Activated T-helper 1 cell treated with anti-CD3 and anti-CD28 coated beads, Interleukin-12 subunit alpha, Interleukin-12 subunit beta, Interleukin-2, Interleukin-4 antibody, amounts not matched to agents 30 ng/mL and 10 ng/mL and 1 ng/mL, durations not matched to agents 14 hours and 24 hours and 36 hours (primary cell): ENCODE measurements at regions of chr10 and their contacts with region 1.

Region 1: GRCh38 chr10:23438550-23439441 is at the start of gene OTUD1:
- DNase-seq: peak; percentile 94
- H3K4me3 Mint-ChIP-seq: peak within 1 kb of the TSS; percentile 83
- H3K27ac Mint-ChIP-seq: peak within 1 kb of the TSS; percentile 84
- H3K4me1 Mint-ChIP-seq: peaks cover 47% of the 10 kb centered on the region
- H3K27me3 Mint-ChIP-seq: peaks cover 5% of the 10 kb centered on the region
- total RNA-seq, gene OTUD1: 19.1 and 20.3 TPM in 2 replicates

Region 2: GRCh38 chr10:23331567-23332290 is 107.1 kb before region 1 on chr10:
- intact Hi-C with region 1: loop called (anchors 2 kb)
- DNase-seq: no peak
- H3K4me3 Mint-ChIP-seq: no peak overlapping the region
- H3K27ac Mint-ChIP-seq: peak overlapping the region; percentile 1
- H3K4me1 Mint-ChIP-seq: peaks cover 20% of the 10 kb centered on the region
- H3K27me3 Mint-ChIP-seq: no peaks in the 10 kb centered on the region

Region 3: GRCh38 chr10:23391821-23392220 is 47.0 kb before region 1 on chr10:
- intact Hi-C with region 1: loop called (anchors 2 kb)
- DNase-seq: no peak
- H3K4me3 Mint-ChIP-seq: no peak overlapping the region
- H3K27ac Mint-ChIP-seq: peak overlapping the region; percentile 16
- H3K4me1 Mint-ChIP-seq: peaks cover 9% of the 10 kb centered on the region
- H3K27me3 Mint-ChIP-seq: no peaks in the 10 kb centered on the region

Region 4: DNA sequence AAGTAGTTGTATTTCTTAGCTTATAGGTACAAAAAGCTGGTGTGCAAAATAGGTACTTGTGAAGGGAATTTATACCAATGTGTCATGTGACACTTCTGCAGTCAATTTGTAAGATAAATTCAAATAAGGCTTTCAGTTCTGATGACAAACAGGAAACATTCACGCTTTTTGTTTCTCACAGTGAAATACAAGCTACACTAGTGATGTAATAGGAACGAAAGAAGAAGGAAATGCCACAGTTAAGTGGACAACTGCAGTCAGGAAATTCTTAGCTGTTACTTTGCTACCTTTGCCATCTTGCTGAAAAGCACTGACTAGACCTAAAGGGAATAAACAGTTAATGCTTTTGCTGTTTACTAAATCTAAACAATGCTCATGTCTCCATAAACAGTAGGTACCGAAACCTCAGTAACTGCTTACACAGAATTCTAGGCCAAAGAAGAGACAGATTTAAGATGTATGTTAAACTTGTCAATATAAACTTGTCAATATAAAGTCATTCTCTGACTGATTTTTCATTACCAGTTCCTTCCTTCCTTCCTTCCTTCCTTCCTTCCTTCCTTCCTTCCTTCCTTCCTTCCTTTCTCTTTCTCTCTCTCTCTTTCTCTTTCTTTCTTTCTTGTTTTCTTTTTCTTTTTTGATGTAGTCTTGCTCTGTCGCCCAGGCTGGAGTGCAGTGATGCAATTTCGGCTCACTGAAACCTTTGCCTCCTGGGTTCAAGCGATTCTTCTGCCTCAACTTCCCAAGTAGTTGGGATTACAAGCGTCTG is 10.2 kb after region 1 on chr10:
- intact Hi-C with region 1: loop called (anchors 1 kb)
- DNase-seq: no peak
- H3K4me3 Mint-ChIP-seq: peak overlapping the region; percentile 21
- H3K27ac Mint-ChIP-seq: peak overlapping the region; percentile 88
- H3K4me1 Mint-ChIP-seq: peaks cover 35% of the 10 kb centered on the region
- H3K27me3 Mint-ChIP-seq: no peaks in the 10 kb centered on the region

Region 5: GRCh38 chr10:23718946-23719345 is 280.1 kb after region 1 on chr10:
- intact Hi-C with region 1: no loop called
- DNase-seq: no peak
- H3K4me3 Mint-ChIP-seq: no peak overlapping the region
- H3K27ac Mint-ChIP-seq: no peak overlapping the region
- H3K4me1 Mint-ChIP-seq: no peaks in the 10 kb centered on the region
- H3K27me3 Mint-ChIP-seq: peaks cover 4% of the 10 kb centered on the region

Region 6: GRCh38 chr10:24383681-24384106 is 944.9 kb after region 1 on chr10:
- intact Hi-C with region 1: loop called (anchors 2 kb)
- DNase-seq: peak; percentile 60
- H3K4me3 Mint-ChIP-seq: peak overlapping the region; percentile 61
- H3K27ac Mint-ChIP-seq: peak overlapping the region; percentile 91
- H3K4me1 Mint-ChIP-seq: peaks cover 35% of the 10 kb centered on the region
- H3K27me3 Mint-ChIP-seq: peaks cover 3% of the 10 kb centered on the region